Mucosa of descending colon (tissue), 3 donors: ENCODE measurements at regions of chr1 and their contacts with region 1.

Region 1: GRCh38 chr1:8560611-8561544 is 243.0 kb downstream of the SLC45A1 start:
- DNase-seq: peak in 1 of 3 donors; percentile 45
- ATAC-seq: peak; percentile 86
- H3K4me3 ChIP-seq: no peak overlapping the region
- H3K4me1 ChIP-seq: no peaks in the 10 kb centered on the region
- CTCF ChIP-seq: peak; percentile 82

Region 2: DNA sequence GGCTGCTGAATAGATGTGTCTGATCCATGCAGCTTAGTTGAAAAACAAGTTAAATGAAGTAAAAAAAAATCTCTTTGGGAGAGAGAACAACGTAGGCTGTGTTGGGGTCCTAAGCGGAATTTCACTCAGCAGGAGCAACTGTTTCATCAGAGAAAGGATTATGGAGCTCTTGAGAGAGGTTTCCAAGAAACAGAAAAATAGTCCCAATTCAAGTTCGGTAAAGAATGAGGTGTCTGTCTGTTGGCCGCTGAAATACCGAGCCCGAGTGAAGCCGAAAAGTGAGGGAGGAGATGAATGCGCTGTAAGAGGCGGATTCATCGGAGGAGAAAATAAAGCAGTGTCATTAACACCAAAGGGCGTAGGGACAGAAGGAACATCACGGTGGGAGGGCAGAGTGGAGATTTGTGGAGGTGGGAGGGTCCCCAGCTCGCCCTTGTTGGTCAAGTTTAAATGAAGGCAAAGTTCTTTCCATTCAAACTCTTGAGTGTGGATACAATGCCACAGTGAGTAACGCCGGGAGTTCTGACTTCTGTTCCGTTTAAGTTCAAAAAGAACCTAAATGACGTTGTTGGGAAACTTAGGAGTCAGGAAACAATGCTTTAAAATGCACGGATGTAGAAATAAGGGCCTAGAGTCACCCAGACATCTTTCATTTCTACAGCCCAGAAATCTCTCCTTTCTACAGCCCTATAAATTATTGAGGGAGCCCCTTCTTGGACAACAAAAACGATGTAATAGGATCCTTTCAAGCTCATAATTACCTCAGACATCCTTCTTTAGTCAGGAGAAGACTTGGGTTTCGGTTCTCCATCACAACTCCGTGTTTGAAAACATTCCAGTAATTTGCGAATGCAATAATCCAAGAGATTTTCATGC is 258.6 kb before region 1 on chr1:
- intact Hi-C with region 1: no loop called
- DNase-seq: no peak
- ATAC-seq: no peak
- H3K4me3 ChIP-seq: no peak overlapping the region
- H3K4me1 ChIP-seq: no peaks in the 10 kb centered on the region
- CTCF ChIP-seq: no peak

Region 3: GRCh38 chr1:8687039-8687438 is 126.2 kb after region 1 on chr1:
- intact Hi-C with region 1: loop called in 1 of 2 experiments (anchors 10 kb)
- DNase-seq: peak; percentile 49 to 57 (median 54)
- ATAC-seq: peak; percentile 87
- H3K4me3 ChIP-seq: no peak overlapping the region
- H3K4me1 ChIP-seq: peaks cover 20% of the 10 kb centered on the region
- CTCF ChIP-seq: no peak

Region 4: DNA sequence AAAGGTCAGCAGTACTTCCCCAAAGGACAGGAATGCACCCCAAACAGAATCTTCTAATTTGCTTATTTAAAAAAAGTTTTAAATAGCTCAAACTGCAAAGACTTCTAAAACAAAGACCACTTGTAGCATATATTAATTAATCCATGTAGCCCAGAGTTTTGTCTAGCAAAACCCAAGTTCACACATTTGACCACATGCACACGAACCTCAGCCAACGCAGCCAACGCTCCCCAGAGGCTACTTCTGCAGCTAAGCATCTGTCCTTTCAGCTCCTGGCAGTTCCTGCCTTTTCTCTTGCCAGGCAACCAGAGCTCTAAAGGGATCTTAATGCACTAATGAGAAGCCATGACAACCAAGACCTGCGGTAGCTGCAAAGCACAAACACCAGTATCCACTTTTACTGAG is 166.9 kb after region 1 on chr1:
- intact Hi-C with region 1: loop called in 1 of 2 experiments (anchors 5 kb)
- DNase-seq: no peak
- ATAC-seq: no peak
- H3K4me3 ChIP-seq: no peak overlapping the region
- H3K4me1 ChIP-seq: peaks cover 6% of the 10 kb centered on the region
- CTCF ChIP-seq: no peak

Region 5: GRCh38 chr1:9428601-9429341 is 867.9 kb after region 1 on chr1:
- intact Hi-C with region 1: no loop called
- DNase-seq: peak; percentile 100
- ATAC-seq: peak; percentile 97
- H3K4me3 ChIP-seq: peak overlapping the region; percentile 2
- H3K4me1 ChIP-seq: peaks cover 15% of the 10 kb centered on the region
- CTCF ChIP-seq: peak; percentile 20